ENCODE measurements at regions of chr20 and their contacts with region 1.

Region 1: GRCh38 chr20:45704969-45705637 is at the start of gene WFDC10B:
- DNase-seq: no peak
- total RNA-seq, gene WFDC10B: not detected

Region 2: DNA sequence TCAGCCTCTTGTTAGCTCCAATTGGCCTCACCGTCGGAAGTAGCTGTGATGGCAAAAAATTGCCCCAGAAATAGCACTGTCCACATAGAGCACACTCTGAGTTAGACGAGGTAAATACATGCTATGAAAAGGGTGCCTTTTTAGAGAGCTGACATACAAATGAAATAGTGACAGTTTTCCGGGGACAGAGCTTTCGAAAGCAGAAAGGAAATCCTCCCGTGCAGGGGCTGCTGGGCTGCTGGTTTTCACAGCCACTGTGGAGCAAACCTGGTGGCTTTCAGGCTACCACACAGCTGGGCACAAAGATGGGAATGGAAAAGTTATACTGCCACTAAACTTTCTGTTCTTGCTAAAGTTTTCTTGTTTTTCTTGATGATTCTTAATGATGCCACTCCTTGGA is 459.0 kb before region 1 on chr20:
- intact Hi-C with region 1: loop called (anchors 10 kb)
- DNase-seq: no peak

Region 3: GRCh38 chr20:45322952-45323383 is 382.1 kb before region 1 on chr20:
- intact Hi-C with region 1: no loop called
- DNase-seq: no peak

Region 4: DNA sequence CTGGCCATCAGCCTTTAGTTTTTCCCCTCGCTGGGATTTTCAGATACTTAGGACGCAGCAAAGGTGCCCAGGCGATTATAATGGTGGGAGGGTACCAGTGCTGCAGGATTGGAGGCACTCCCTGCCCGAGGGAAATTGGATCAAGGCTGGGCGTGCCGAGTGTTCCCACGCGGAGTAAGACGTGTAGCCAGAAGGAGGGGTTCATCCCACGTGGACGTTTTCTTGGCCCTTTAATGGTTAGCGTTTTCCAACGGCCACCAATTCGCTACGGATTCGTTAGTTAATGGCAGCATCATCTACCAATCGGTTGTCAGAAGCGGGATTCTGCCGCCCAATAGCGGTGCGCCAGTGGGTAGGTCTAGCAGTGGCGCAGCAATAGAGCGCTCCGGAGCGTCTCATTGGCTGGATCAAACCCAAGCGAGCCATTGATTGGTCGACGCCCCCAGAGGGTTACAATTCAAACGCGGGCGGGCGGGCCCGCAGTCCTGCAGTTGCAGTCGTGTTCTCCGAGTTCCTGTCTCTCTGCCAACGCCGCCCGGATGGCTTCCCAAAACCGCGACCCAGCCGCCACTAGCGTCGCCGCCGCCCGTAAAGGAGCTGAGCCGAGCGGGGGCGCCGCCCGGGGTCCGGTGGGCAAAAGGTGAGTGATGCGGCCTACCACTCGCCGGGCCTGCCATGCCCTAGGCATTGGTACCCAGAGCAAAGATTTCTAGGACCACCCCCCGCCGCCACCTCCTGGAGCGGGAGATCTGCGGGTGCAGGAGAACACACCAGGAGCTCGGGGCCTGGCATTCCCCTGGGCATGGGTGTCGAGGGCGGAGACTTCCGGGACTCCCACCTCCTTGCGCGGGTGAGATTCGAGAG is 107.3 kb after region 1 on chr20 and contains the start of gene UBE2C:
- intact Hi-C with region 1: no loop called
- DNase-seq: peak; percentile 97
- total RNA-seq, gene UBE2C: 0.38 TPM